Mammary epithelial cell (primary cell): ENCODE measurements at regions of chr1 and their contacts with region 1.

Region 1: GRCh38 chr1:2391041-2391930 is at the starts of genes MORN1 and RER1:
- DNase-seq: peak; percentile 99
- H3K4me3 ChIP-seq: peak within 1 kb of the TSS; percentile 85 to 98 (median 95)
- H3K27ac ChIP-seq: peak within 1 kb of the TSS; percentile 62
- H3K4me1 ChIP-seq: peaks cover 22% of the 10 kb centered on the region
- H3K27me3 ChIP-seq: no peaks in the 10 kb centered on the region
- CTCF ChIP-seq: no peak
- total RNA-seq, gene MORN1: 9.8 to 12.8 TPM
- total RNA-seq, gene RER1: 45.5 to 162 TPM

Region 2: GRCh38 chr1:1954831-1955441 is 436.4 kb before region 1 on chr1:
- CTCF ChIA-PET with region 1: no interaction called
- dilution Hi-C with region 1: no loop called
- in situ Hi-C with region 1: no loop called
- intact Hi-C with region 1: no loop called
- DNase-seq: no peak
- H3K4me3 ChIP-seq: no peak overlapping the region
- H3K27ac ChIP-seq: no peak overlapping the region
- H3K4me1 ChIP-seq: peaks cover 3% of the 10 kb centered on the region
- H3K27me3 ChIP-seq: no peaks in the 10 kb centered on the region
- CTCF ChIP-seq: peak in 1 of 2 donors; percentile 7

Region 3: GRCh38 chr1:2345223-2346080 is 45.8 kb before region 1 on chr1:
- CTCF ChIA-PET with region 1: no interaction called
- dilution Hi-C with region 1: loop called (anchors 5 kb)
- in situ Hi-C with region 1: no loop called
- intact Hi-C with region 1: no loop called
- DNase-seq: no peak
- H3K4me3 ChIP-seq: no peak overlapping the region
- H3K27ac ChIP-seq: no peak overlapping the region
- H3K4me1 ChIP-seq: peaks cover 7% of the 10 kb centered on the region
- H3K27me3 ChIP-seq: no peaks in the 10 kb centered on the region
- CTCF ChIP-seq: no peak

Region 4: GRCh38 chr1:2468041-2468472 is 76.8 kb after region 1 on chr1:
- CTCF ChIA-PET with region 1: no interaction called
- dilution Hi-C with region 1: no loop called
- in situ Hi-C with region 1: no loop called
- intact Hi-C with region 1: no loop called
- DNase-seq: no peak
- H3K4me3 ChIP-seq: no peak overlapping the region
- H3K27ac ChIP-seq: no peak overlapping the region
- H3K4me1 ChIP-seq: peaks cover 20% of the 10 kb centered on the region
- H3K27me3 ChIP-seq: no peaks in the 10 kb centered on the region
- CTCF ChIP-seq: no peak

Region 5: GRCh38 chr1:2561898-2562545 is 170.7 kb after region 1 on chr1:
- CTCF ChIA-PET with region 1: no interaction called
- dilution Hi-C with region 1: loop called (anchors 10 kb)
- in situ Hi-C with region 1: no loop called
- intact Hi-C with region 1: no loop called
- DNase-seq: no peak
- H3K4me3 ChIP-seq: no peak overlapping the region
- H3K27ac ChIP-seq: no peak overlapping the region
- H3K4me1 ChIP-seq: peaks cover 4% of the 10 kb centered on the region
- H3K27me3 ChIP-seq: no peaks in the 10 kb centered on the region
- CTCF ChIP-seq: peak; percentile 30 to 57